ENCODE measurements at regions of chr11 and their contacts with region 1.

Region 1: DNA sequence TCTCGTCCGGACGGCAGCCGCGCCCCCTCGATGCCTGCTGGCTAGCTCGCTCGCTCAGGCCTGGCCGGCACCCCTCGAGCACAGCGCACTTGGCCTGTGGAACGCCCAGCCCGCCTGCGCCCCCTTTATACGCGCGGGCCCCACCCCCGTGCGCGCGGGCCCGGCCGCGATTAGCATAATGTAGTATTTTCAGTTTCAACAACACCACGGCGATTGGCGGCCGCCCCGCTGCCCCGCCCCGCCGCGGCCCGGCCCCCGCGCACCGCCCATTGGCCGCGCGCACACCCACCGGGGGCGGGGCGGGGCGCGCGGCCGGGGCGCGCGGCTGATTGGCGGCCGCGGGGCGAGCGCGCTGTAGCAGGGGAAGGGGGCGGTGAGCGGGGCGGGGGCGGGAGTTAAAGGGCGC is at the start of gene CDKN1C:
- DNase-seq: peak; percentile 89
- H3K4me3 ChIP-seq: peak within 1 kb of the TSS; percentile 81 to 88
- H3K27ac ChIP-seq: peak within 1 kb of the TSS; percentile 88 to 89
- H3K4me1 ChIP-seq: peaks cover 3% of the 10 kb centered on the region
- H3K27me3 ChIP-seq: no peaks in the 10 kb centered on the region
- CTCF ChIP-seq: peak in 1 of 4 experiments; percentile 36
- POLR2A ChIP-seq: peak; percentile 98
- total RNA-seq, gene CDKN1C: 36.5 to 42.7 TPM

Region 2: GRCh38 chr11:1763796-1764661 is 1121.7 kb before region 1 on chr11 and contains the start of gene CTSD:
- intact Hi-C with region 1: loop called (anchors 10 kb)
- DNase-seq: peak; percentile 85
- H3K4me3 ChIP-seq: peak within 1 kb of the TSS; percentile 92 to 98
- H3K27ac ChIP-seq: peak within 1 kb of the TSS; percentile 69 to 81
- H3K4me1 ChIP-seq: peaks cover 4% of the 10 kb centered on the region
- H3K27me3 ChIP-seq: no peaks in the 10 kb centered on the region
- CTCF ChIP-seq: no peak
- POLR2A ChIP-seq: peak; percentile 84
- total RNA-seq, gene CTSD: 497 to 983 TPM

Region 3: GRCh38 chr11:2428322-2428795 is 457.3 kb before region 1 on chr11:
- intact Hi-C with region 1: loop called (anchors 5 kb)
- DNase-seq: peak; percentile 77
- H3K4me3 ChIP-seq: no peak overlapping the region
- H3K27ac ChIP-seq: no peak overlapping the region
- H3K4me1 ChIP-seq: no peaks in the 10 kb centered on the region
- H3K27me3 ChIP-seq: no peaks in the 10 kb centered on the region
- CTCF ChIP-seq: peak; percentile 93 to 98 (median 98)
- POLR2A ChIP-seq: no peak

Region 4: DNA sequence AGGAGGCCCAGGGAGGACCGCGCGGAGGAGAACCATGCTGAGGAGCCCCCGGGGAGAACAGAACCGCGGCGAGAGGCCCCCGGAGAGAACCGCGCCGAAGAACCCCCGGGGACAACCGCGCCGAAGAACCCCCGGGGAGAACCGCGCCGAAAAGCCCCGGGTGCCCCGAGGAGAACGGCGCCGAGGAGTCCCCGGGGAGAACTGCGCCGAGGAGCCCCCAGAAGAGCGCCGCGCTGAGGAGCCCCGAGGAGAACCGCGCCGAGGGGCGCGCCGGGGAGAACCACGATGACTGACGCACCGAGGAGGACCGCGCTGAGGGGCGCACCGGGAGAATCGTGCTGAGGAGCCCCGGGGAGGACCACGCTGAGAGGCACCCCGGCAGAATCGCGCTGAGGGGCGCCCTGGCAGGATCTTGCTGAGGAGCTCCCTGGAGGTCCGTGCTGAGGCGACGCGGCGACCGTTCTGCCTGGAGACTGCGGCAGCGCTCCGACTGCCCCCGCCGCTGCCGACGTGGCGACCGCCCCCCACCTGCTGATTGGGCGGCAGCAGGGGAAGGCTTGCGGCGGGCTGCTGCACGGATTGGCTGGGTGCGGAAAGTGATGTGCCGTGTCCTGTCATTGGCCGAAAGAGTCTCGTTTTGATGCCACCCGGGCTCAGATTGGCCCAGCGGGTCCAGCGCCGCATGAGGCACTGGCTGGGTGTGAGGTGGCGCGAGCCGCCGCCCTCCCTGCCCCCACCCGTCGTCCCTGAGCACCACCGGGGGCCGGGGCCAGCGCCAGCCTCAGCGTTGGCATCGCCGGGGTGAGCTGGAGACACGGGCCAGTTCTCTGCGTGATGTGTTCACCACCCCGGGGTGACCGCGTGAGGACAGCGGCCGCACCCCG is 185.9 kb before region 1 on chr11 and contains the start of gene KCNQ1OT1:
- intact Hi-C with region 1: loop called (anchors 2 kb)
- DNase-seq: peak; percentile 89
- H3K4me3 ChIP-seq: peak within 1 kb of the TSS; percentile 60 to 61
- H3K27ac ChIP-seq: peak within 1 kb of the TSS; percentile 80 to 84
- H3K4me1 ChIP-seq: no peaks in the 10 kb centered on the region
- H3K27me3 ChIP-seq: no peaks in the 10 kb centered on the region
- CTCF ChIP-seq: no peak
- POLR2A ChIP-seq: peak; percentile 93
- total RNA-seq, gene KCNQ1OT1: 1.0 to 2.1 TPM

Region 5: GRCh38 chr11:2825889-2826678 is 59.6 kb before region 1 on chr11:
- intact Hi-C with region 1: loop called (anchors 1 kb)
- DNase-seq: peak; percentile 82
- H3K4me3 ChIP-seq: no peak overlapping the region
- H3K27ac ChIP-seq: peak overlapping the region; percentile 84 to 85
- H3K4me1 ChIP-seq: peaks cover 20% of the 10 kb centered on the region
- H3K27me3 ChIP-seq: no peaks in the 10 kb centered on the region
- CTCF ChIP-seq: no peak
- POLR2A ChIP-seq: no peak

Measured in prostate gland (tissue), 2 donors.